Prostate gland (tissue), 2 donors: ENCODE measurements at regions of chr2 and their contacts with region 1.

Region 1: DNA sequence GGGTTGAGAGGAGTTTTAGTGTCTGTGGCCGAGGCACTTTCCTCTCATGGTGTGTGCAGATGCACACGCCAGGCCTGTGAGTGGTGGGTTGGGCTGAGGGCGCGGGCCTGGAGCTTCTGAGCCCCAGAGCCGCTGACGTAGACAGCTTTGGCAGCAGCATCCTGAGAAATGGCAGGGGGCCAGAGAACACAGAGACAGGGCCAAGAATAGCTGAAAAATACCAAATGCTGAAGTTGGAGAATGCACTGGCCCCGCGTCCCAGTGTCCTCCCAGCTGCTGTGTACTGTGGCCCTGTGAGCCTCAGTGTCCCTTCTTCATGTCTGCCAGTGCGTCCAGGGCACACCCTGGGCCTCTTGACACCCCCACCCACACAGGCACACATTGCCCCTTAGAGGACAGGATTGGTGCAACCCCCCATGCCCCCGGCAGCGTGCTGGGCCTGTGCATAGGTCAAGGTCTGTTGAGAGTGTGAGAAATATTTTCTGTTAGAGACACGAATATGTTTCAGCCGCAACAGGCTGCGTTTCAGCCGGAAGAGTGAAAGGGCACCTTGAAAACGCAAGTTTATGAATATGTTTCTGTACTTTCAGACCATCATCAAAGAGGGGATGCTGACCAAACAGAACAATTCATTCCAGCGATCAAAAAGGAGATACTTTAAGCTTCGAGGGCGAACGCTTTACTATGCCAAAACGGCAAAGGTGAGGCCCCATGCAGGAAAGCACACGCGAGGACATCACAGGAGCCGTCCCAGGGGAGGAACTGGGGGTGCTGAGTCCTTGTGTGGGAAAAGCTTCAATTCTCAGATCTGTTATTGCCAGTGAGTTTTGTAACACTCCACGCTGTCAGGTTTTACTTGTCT is 33.6 kb downstream of the DGKD start:
- DNase-seq: peak; percentile 91
- H3K4me3 ChIP-seq: no peak overlapping the region
- H3K27ac ChIP-seq: peak overlapping the region; percentile 87 to 89
- H3K4me1 ChIP-seq: peaks cover 18% of the 10 kb centered on the region
- H3K27me3 ChIP-seq: no peaks in the 10 kb centered on the region
- CTCF ChIP-seq: no peak
- POLR2A ChIP-seq: no peak

Region 2: DNA sequence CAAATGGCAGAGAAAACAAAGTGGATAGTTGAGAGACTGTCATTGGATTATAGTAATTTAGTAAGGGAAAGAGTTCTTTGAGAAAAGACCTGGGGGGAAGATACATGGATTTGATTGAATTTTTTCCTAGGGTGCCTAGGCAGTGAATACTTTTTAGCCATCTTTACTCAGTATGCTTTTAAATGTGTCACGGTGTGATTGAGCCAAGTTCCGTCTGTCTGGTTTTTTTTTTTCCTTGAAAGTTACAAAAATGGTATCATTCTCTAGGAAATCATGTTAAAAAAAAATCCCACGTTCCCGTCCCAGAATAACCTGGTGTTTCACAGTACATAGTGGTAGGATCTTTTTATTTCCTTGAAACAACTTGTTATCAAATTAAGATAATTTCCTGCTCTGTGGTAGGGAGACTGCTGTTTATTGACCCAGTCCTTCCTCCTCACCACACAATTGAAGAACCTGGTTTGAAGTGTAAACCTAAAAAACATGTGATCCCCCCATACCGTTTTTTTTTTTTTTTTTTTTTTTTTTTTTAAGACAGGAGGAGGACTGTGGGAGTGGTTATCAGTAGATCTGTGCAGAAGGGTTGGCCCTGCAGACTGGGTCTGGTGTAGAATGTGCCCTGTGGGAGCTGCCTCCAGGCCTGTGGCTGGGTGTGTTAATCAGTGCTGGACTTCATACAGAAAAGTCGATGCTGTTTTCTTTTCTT is 21.5 kb after region 1 on chr2:
- intact Hi-C with region 1: loop called (anchors 2 kb)
- DNase-seq: no peak
- H3K4me3 ChIP-seq: no peak overlapping the region
- H3K27ac ChIP-seq: peak overlapping the region in 1 of 2 donors; percentile 33
- H3K4me1 ChIP-seq: peaks cover 7% of the 10 kb centered on the region
- H3K27me3 ChIP-seq: no peaks in the 10 kb centered on the region
- CTCF ChIP-seq: no peak
- POLR2A ChIP-seq: no peak

Region 3: DNA sequence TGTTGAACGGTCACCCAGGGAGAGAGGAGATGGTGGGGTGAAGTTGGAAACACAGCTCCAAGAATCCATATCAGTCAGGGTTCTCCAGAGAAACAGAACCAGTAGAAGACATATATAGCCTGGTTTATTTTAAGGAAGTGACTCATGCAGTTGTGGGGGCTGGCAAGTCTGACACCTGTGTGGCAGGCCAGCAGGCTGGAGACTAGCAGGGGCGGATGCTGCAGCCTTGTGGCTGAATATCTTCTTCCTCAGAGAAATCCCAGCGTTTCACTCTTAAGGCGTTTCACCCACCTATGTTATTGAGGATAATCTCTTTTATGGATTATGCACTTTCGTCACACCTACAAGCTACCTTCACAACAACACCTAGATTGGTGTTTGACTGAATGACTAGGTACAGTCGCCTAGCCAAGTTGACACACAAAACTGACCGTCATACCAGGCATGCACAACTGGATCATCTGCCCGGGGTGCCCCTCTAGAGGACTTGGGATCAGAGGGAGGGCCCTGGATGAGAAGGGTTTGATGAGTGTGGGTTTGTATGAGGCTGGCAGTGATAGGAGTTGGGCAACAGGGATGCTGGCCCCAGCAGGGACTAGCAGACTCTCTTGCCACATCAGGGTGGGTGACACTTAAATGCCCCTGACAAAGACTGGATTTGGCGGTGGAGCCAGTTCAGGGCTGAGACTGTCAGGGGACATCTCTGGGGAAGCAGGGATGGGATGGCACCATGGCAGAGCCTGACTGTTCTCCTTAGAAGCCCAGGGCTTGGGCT is 413.6 kb after region 1 on chr2:
- intact Hi-C with region 1: no loop called
- DNase-seq: no peak
- H3K4me3 ChIP-seq: no peak overlapping the region
- H3K27ac ChIP-seq: no peak overlapping the region
- H3K4me1 ChIP-seq: no peaks in the 10 kb centered on the region
- H3K27me3 ChIP-seq: no peaks in the 10 kb centered on the region
- CTCF ChIP-seq: no peak
- POLR2A ChIP-seq: no peak